CD8-positive, alpha-beta memory T cell (primary cell): ENCODE measurements at regions of chr5 and their contacts with region 1.

Region 1: DNA sequence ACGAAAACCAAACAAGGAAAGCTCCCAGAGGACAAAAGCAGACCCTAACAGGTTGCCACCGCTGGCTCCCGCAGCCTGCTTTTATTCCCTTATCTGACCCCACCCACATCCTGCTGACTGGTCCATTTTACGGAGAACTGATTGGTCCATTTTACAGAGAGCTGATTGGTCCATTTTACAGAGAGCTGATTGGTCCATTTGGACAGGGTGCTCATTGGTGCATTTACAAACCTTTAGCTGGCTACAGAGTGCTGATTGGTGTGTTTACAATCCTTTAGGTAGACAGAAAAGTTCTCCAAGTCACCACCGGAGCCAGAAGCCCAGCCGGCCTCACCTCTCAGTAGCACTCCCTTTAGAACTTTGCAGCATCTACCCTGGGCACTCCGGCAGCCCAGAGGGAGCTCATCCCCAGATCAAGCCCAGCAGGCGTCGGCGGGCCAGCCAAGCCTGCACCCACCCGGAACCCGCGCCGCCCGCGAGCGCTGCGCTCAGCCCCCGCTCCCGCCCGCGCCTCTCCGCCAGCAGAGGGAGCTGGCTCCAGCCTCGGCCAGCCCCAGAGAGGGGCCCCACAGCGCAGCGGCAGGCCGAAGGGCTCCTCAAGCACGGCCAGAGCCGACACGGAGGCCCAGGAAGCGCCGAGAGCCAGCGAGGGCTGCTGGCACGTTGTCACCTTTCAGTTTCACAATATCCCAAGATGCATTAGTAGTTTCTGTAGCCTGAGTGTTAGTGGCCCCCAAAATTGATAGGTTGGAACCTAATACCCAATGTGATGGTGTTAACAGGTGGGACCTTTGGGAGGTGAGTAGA is 35.3 kb upstream of the CLPTM1L start:
- DNase-seq: peak; percentile 43 to 69 (median 67)
- H3K4me3 ChIP-seq: peak overlapping the region; percentile 38
- H3K4me3 Mint-ChIP-seq: peak overlapping the region; percentile 60 to 81 (median 72)
- H3K27ac ChIP-seq: no peak overlapping the region
- H3K27ac Mint-ChIP-seq: peak overlapping the region in 7 of 8 donors; percentile 11 to 90 (median 60)
- H3K4me1 ChIP-seq: peaks cover 9% of the 10 kb centered on the region
- H3K4me1 Mint-ChIP-seq: peaks cover 16 to 30% (median 18%) of the 10 kb centered on the region in 3 donors
- H3K27me3 ChIP-seq: no peaks in the 10 kb centered on the region
- H3K27me3 Mint-ChIP-seq: peaks cover 0 to 9% of the 10 kb centered on the region in 2 donors

Region 2: DNA sequence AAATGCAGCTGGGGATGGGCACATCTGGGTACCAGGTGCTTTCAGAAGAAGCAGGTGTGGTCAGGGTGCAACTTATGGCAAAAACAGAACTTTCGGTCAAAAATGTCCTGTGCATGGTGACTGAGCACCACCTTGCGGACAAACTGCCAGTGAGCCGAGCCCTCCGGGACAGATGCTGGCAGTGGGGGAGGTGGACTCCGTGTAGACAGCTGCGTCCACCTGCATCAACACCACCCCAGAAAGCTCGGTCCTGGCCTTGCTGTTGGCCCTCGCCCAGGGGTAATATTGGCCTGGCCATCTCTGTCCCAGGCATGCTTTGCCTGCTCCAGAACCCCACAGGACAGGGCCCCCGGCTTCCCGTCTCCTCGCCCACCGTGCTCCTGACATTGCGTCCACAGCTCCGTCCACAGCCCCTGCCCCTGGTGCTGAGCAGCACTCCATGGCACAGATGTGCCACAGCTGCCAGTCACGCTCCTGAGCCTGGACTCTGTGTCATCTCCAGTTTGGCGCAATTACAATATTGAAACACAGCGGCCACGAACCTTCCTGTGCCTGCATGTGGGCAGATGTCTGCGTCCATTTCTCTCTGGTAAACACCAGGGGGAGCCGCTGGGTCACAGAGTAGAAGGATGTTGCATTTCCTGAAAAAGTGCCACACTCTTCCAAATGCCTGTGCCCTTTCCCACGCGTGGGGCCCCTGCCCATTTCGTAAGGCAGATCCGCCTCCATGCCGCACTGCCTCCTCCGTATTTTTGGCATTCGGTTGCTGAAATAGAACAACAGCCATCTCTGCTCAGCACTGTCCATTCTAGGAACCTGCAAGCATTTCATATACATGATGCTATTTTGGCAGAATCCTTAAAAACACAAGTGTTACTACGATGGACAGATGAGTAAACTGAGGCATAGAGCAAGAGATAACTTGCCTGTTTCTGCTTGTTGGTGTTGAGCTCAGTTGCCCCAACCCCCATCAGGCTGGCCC is 212.2 kb before region 1 on chr5:
- CTCF ChIA-PET with region 1: interaction called, 10 read pairs
- POLR2A ChIA-PET with region 1: no interaction called
- DNase-seq: peak; percentile 54 to 74 (median 63)
- H3K4me3 ChIP-seq: no peak overlapping the region
- H3K4me3 Mint-ChIP-seq: peak overlapping the region; percentile 34 to 85 (median 83)
- H3K27ac ChIP-seq: no peak overlapping the region
- H3K27ac Mint-ChIP-seq: peak overlapping the region in 3 of 8 donors; percentile 30 to 73 (median 63)
- H3K4me1 ChIP-seq: peaks cover 4% of the 10 kb centered on the region
- H3K4me1 Mint-ChIP-seq: peaks cover 14 to 19% (median 14%) of the 10 kb centered on the region in 3 donors
- H3K27me3 ChIP-seq: peaks cover under 1% of the 10 kb centered on the region
- H3K27me3 Mint-ChIP-seq: peaks cover 2 to 25% of the 10 kb centered on the region in 2 donors

Region 3: DNA sequence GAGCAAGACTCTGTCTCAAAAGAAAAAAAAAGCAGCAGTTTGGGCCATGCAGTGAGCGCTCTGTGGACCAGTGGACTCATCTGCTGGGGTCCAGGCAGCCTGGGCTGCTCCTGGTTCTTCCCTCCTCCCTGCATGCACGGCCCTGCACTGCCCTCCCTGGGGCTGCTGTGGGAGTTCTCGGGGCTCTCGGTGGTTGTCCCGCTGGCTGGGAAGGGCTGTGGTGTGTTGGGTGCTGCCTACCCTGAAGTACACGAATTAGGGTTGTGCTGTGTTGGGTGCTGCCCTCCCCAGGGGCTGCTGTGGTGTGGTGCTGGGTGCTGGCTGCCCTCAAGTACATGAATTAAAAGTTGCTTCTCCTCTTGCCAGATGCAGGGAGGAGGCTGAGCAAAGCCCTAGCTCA is 17.1 kb before region 1 on chr5:
- CTCF ChIA-PET with region 1: interaction called, 11 read pairs
- POLR2A ChIA-PET with region 1: no interaction called
- DNase-seq: no peak
- H3K4me3 ChIP-seq: no peak overlapping the region
- H3K4me3 Mint-ChIP-seq: no peak overlapping the region
- H3K27ac ChIP-seq: no peak overlapping the region
- H3K27ac Mint-ChIP-seq: no peak overlapping the region
- H3K4me1 ChIP-seq: no peaks in the 10 kb centered on the region
- H3K4me1 Mint-ChIP-seq: no peaks in the 10 kb centered on the region
- H3K27me3 ChIP-seq: peaks cover 20% of the 10 kb centered on the region
- H3K27me3 Mint-ChIP-seq: peaks cover 23 to 42% of the 10 kb centered on the region in 2 donors